Left colon (tissue), 2 donors: ENCODE measurements at regions of chr20 and their contacts with region 1.

Region 1: DNA sequence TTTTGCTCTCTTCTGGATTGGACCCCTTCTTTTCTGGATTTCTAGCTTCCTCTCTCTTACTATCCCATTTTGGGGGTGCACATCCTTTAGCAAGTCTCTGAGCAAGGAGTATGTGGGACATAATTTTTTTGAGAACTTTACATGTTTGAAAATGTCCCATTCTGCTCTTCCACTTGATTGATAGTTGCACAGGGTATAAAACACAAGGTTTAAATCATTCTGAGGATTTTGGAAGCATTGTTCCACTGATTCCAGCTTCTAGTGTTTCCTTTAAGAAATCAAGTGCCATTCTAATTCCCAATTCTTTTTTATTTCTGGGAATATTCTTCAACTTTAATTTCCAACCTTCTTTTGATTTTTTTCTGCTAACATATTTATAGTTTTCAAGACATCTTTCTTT is 60.7 kb downstream of the APCDD1L start:
- DNase-seq: no peak
- ATAC-seq: no peak

Region 2: DNA sequence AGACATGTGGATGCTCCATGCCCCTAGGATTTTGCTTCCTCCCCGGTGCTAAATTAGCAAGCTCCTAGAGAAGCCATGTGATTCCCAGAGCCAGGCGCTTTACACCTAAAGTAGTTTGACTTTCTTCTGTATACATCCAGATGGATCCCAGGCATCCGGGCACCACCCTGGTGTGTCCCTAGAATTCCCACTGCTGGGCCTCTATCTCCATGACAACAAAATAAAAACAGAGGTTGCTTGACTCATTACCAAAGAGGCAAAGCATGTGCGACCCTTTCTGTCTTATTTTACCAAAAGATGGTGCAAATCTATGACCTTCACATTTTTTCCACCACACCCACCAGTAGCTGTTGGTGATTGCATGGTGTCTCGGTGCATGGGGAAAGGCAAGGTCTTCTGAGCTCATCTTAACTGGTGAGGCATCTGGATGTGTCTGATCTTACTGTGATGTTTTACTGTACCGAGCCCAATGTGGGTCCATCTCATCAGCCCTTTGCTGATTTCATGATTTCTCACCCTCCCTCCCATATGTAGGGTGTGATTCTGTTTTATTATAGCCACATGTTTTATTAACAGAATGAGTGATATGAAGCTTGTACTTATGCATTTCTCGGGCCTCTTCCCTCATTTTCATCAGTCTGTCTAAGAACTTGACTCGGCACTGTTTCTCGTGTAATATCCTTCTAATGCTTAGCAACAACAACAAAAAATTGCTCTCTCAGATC is 92.8 kb before region 1 on chr20:
- intact Hi-C with region 1: no loop called
- DNase-seq: no peak
- ATAC-seq: no peak

Region 3: DNA sequence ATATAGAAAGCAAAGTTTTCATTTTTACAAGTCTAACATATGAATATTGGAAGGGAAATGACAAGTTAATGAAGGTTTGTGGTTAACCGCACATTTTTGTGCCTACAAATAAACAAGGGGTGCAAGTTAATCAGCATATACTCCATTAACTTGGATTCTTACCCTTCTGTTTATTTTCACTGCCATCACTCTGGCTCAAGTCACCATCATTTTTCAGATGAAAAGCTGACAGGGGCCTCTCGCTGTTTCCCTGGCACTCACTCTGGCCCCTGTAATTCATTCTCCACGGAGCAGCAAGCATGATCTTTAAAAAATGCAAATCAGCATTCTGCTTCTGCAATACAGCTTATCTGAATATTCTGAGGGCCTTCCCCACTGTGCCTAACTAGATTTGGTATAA is 30.9 kb after region 1 on chr20:
- intact Hi-C with region 1: loop called in 1 of 2 experiments (anchors 2 kb)
- DNase-seq: no peak
- ATAC-seq: no peak

Region 4: GRCh38 chr20:58550275-58551060 is 96.0 kb after region 1 on chr20:
- intact Hi-C with region 1: no loop called
- DNase-seq: no peak
- ATAC-seq: no peak